ENCODE measurements at regions of chr5 and their contacts with region 1.

Region 1: DNA sequence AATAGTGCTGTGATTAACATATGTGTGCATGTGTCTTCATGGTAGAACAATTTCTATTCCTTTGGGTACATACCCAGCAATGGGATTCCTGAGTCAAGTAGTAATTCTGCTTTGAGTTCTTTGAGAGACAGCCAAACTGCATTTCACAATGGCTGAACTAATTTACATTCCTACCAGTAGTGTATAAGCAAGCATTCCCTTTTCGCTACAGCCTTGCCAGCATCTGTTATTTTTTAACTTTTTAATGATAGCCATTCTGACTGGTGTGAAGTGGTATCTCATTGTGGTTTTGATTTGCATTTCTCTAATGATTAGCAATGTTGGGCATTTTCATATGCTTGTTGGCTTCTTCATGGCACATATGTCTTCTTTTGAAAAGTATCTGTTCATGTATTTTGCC is 308.5 kb downstream of the ARRDC3 start:
- DNase-seq: peak; percentile 89
- ATAC-seq: peak; percentile 77
- H3K4me3 ChIP-seq: no peak overlapping the region
- H3K27ac ChIP-seq: no peak overlapping the region
- H3K4me1 ChIP-seq: peaks cover 9% of the 10 kb centered on the region
- H3K27me3 ChIP-seq: no peaks in the 10 kb centered on the region
- CTCF ChIP-seq: peak; percentile 48
- POLR2A ChIP-seq: no peak
- RAD21 ChIP-seq: no peak

Region 2: GRCh38 chr5:90916947-90917800 is 157.4 kb before region 1 on chr5:
- CTCF ChIA-PET with region 1: no interaction called
- POLR2A ChIA-PET with region 1: no interaction called
- dilution Hi-C with region 1: no loop called
- in situ Hi-C with region 1: no loop called
- intact Hi-C with region 1: no loop called
- DNase-seq: no peak
- ATAC-seq: no peak
- H3K4me3 ChIP-seq: no peak overlapping the region
- H3K27ac ChIP-seq: no peak overlapping the region
- H3K4me1 ChIP-seq: no peaks in the 10 kb centered on the region
- H3K27me3 ChIP-seq: no peaks in the 10 kb centered on the region
- CTCF ChIP-seq: no peak
- POLR2A ChIP-seq: no peak
- RAD21 ChIP-seq: no peak

Region 3: GRCh38 chr5:90940227-90940995 is 134.2 kb before region 1 on chr5:
- CTCF ChIA-PET with region 1: no interaction called
- POLR2A ChIA-PET with region 1: no interaction called
- dilution Hi-C with region 1: no loop called
- in situ Hi-C with region 1: no loop called
- intact Hi-C with region 1: loop called (anchors 5 kb)
- DNase-seq: peak; percentile 60
- ATAC-seq: peak; percentile 81
- H3K4me3 ChIP-seq: no peak overlapping the region
- H3K27ac ChIP-seq: no peak overlapping the region
- H3K4me1 ChIP-seq: peaks cover 10% of the 10 kb centered on the region
- H3K27me3 ChIP-seq: no peaks in the 10 kb centered on the region
- CTCF ChIP-seq: no peak
- POLR2A ChIP-seq: no peak
- RAD21 ChIP-seq: no peak

Measured in IMR-90 (cell line).